Endothelial cell of umbilical vein (primary cell): ENCODE measurements at regions of chrX and their contacts with region 1.

Region 1: GRCh38 chrX:3244955-3245354 is 101.5 kb downstream of the MXRA5 start:
- DNase-seq: peak; percentile 8
- H3K4me3 ChIP-seq: no peak overlapping the region
- H3K27ac ChIP-seq: no peak overlapping the region
- H3K4me1 ChIP-seq: no peaks in the 10 kb centered on the region
- H3K27me3 ChIP-seq: no peaks in the 10 kb centered on the region
- CTCF ChIP-seq: peak; percentile 10 to 24
- POLR2A ChIP-seq: no peak

Region 2: GRCh38 chrX:3548765-3549391 is 303.9 kb after region 1 on chrX:
- CTCF ChIA-PET with region 1: interaction called, 3 read pairs
- POLR2A ChIA-PET with region 1: no interaction called
- dilution Hi-C with region 1: no loop called
- intact Hi-C with region 1: loop called (anchors 5 kb)
- DNase-seq: peak; percentile 4
- H3K4me3 ChIP-seq: no peak overlapping the region
- H3K27ac ChIP-seq: no peak overlapping the region
- H3K4me1 ChIP-seq: no peaks in the 10 kb centered on the region
- H3K27me3 ChIP-seq: no peaks in the 10 kb centered on the region
- CTCF ChIP-seq: no peak
- POLR2A ChIP-seq: no peak